PC-3 (cell line): ENCODE measurements at regions of chr19 and their contacts with region 1.

Region 1: DNA sequence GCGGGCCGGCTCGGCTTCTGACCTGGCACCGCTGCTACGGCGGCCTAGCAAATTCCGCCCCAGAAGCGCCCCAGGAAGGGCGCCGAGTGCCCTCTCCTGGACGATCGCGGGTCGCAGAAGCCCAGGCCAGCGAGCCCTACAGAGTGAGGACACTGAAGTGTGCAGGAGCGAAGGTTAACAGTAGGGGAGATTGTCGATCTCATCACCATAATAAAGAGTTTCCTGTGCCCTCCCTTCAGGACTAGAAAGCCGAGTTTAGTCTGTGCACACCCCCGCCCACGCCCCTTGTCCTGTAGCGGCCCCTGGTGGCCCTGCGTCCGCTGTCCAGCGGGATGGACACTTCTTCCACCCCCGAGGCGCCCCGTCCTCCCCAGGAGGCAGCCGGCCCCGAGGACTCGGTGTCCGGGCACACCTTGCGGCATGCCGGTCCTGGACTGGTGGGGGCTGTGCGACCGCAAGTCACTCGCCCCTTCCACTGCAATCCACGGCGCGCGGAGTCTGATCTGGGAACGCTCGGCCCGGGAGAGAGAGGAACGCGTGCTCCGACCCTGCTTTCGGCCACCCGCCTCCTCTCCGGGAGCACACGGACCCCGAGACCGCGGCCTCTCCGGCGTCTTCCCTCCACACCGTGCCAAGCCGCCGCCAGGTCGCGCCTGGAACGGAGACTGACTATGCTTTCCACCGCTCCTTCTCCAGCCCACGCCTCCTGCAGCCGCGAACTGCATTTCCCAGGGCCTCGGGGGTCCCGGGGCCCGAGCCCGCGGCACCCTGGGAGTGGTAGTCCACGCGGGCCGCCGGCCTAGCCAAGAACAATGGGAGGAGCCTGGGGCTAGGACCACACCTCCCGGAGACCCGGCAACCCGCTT is 769 bp upstream of the KMT2B start:
- DNase-seq: peak; percentile 77
- ATAC-seq: peak; percentile 84
- H3K4me3 ChIP-seq: peak overlapping the region; percentile 91
- H3K27ac ChIP-seq: peak overlapping the region; percentile 50
- H3K4me1 ChIP-seq: peaks cover 20% of the 10 kb centered on the region; the same call in 1 of the 2 replicates
- H3K27me3 ChIP-seq: no peaks in the 10 kb centered on the region
- CTCF ChIP-seq: peak; percentile 80

Region 2: GRCh38 chr19:35545001-35545911 is 171.8 kb before region 1 on chr19 and contains the start of gene TMEM147:
- CTCF ChIA-PET with region 1: no interaction called
- POLR2A ChIA-PET with region 1: no interaction called
- intact Hi-C with region 1: loop called (anchors 5 kb)
- DNase-seq: peak; percentile 84
- ATAC-seq: peak; percentile 94
- H3K4me3 ChIP-seq: peak within 1 kb of the TSS; percentile 88
- H3K27ac ChIP-seq: peak within 1 kb of the TSS; percentile 48
- H3K4me1 ChIP-seq: peaks cover 14% of the 10 kb centered on the region; the same call in 1 of the 2 replicates
- H3K27me3 ChIP-seq: no peaks in the 10 kb centered on the region
- CTCF ChIP-seq: no peak
- total RNA-seq, gene TMEM147: 191 and 206 TPM in 2 replicates

Region 3: DNA sequence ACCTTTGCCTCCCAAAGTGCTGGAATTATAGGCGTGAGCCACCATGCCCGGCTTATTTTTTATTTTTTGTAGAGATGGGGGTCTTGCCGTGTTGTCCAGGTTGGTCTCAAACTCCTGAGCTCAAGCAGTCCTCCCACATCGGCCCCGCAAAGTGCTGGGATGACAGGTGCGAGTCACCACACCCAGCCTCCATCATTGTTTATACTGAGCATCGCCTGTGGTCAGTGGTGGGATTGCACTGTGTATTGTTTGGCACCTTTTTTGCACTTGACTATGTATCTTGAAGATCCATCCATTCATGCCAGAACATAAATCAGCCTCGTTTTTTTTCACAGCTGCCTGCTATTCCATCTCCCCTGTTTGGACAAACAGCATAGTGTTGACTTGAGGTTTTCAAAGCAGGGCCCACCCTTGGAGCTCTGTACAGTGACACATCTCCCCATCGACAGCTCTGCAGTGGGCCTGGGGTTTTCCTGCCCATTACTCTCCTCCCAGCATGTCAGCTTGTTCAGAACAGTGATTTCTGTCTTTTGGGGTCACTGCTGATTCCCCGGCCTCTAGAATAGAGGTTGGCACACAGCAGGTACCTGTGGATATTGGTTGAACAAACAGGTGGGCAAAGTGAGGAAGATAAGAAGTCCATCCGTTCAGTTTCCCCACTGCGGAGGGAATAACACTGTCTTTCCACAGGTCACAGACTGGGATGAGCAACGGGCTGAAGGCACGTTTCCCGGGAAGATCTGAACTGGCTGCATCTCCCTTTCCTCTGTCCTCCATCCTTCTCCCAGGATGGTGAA is 58.9 kb before region 1 on chr19:
- CTCF ChIA-PET with region 1: no interaction called
- POLR2A ChIA-PET with region 1: interaction called, 13 read pairs
- intact Hi-C with region 1: no loop called
- DNase-seq: peak; percentile 18
- ATAC-seq: no peak
- H3K4me3 ChIP-seq: no peak overlapping the region
- H3K27ac ChIP-seq: no peak overlapping the region
- H3K4me1 ChIP-seq: no peaks in the 10 kb centered on the region
- H3K27me3 ChIP-seq: no peaks in the 10 kb centered on the region
- CTCF ChIP-seq: 0 out of 2 replicates have a peak, but pooled peaks have one; percentile 20

Region 4: DNA sequence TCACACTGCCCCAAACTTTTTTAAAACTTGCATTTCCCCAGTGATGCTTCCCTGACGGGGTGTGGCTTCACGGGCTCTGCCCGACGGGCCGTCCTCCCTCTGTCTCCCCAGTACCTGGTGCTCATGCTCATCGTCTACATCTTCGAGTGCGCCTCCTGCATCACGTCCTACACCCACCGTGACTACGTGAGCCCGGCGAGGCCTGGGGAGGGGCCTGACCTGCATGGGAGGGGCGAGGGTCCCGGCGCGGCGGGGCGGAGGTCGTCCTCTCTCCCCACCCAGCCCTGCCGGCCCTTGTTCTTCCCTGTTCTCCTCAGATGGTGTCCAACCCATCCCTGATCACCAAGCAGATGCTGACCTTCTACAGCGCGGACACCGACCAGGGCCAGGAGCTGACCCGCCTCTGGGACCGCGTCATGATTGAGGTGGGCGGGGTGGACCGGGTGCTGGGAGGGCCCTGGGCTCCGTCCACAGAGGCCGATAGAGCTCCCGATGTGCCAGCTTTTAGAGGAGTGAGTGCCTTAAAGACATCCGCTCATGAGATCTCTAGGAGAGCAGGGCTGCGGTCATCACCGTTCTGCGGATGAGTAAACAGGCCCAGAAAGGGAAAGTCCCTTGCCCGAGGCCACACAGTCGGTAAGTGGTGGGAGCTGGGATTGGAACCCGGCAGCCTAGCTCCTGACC is 43.8 kb before region 1 on chr19:
- CTCF ChIA-PET with region 1: no interaction called
- POLR2A ChIA-PET with region 1: no interaction called
- intact Hi-C with region 1: no loop called
- DNase-seq: no peak
- ATAC-seq: no peak
- H3K4me3 ChIP-seq: no peak overlapping the region
- H3K27ac ChIP-seq: no peak overlapping the region
- H3K4me1 ChIP-seq: no peaks in the 10 kb centered on the region
- H3K27me3 ChIP-seq: 0 out of 2 replicates have a peak, but pooled peaks cover 7% of the 10 kb centered on the region
- CTCF ChIP-seq: no peak

Region 5: GRCh38 chr19:35693830-35694599 is 23.0 kb before region 1 on chr19:
- CTCF ChIA-PET with region 1: no interaction called
- POLR2A ChIA-PET with region 1: no interaction called
- intact Hi-C with region 1: loop called (anchors 1 kb)
- DNase-seq: peak; percentile 86
- ATAC-seq: peak; percentile 100
- H3K4me3 ChIP-seq: no peak overlapping the region
- H3K27ac ChIP-seq: no peak overlapping the region
- H3K4me1 ChIP-seq: no peaks in the 10 kb centered on the region
- H3K27me3 ChIP-seq: no peaks in the 10 kb centered on the region
- CTCF ChIP-seq: peak; percentile 84

Region 6: DNA sequence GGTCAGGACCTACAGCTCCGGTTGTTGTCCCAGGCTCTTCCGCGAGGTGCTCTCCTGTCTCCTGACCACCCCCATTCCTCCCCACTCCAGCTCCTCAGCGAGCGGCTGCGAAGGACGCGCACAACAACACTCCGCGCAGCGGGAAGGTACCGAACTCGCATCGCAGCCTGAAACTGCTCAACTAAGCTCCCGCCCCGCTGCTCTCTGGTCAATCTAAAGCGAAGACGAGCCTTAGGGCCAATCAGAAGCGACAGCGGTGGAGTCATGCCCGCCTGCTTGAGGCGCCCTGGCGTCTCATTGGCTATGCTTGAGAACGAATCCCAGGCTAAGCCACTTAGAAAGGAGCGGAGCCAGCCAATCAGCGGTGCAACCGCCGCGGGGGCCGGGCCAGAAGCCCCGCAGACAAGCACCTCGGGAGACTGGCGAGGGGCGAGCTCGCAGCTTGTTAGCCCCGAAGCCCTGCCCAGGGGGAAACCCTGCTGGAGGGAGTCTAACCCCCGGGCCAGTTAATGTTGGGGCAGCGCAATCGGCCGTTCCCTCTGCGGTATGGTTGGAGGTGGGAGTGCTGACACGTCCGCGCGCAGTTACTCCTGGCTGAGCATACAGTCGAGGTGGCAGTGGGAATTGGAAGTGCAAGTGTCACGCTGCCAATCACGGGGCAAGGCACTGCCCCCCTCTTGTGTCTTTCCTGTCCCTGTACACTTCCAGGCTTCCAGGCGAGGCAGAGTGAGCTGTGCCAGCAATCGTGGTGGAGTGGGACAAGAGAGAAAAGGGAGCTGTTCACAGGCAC is 14.6 kb before region 1 on chr19:
- CTCF ChIA-PET with region 1: no interaction called
- POLR2A ChIA-PET with region 1: no interaction called
- intact Hi-C with region 1: loop called (anchors 2 kb)
- DNase-seq: peak; percentile 96
- ATAC-seq: peak; percentile 100
- H3K4me3 ChIP-seq: peak overlapping the region; percentile 84
- H3K27ac ChIP-seq: no peak overlapping the region
- H3K4me1 ChIP-seq: no peaks in the 10 kb centered on the region
- H3K27me3 ChIP-seq: no peaks in the 10 kb centered on the region
- CTCF ChIP-seq: no peak

Region 7: GRCh38 chr19:35748106-35749020 is 31.3 kb after region 1 on chr19 and contains the start of gene LIN37:
- CTCF ChIA-PET with region 1: no interaction called
- POLR2A ChIA-PET with region 1: no interaction called
- intact Hi-C with region 1: loop called (anchors 2 kb)
- DNase-seq: peak; percentile 97
- ATAC-seq: peak; percentile 83
- H3K4me3 ChIP-seq: peak within 1 kb of the TSS; percentile 100
- H3K27ac ChIP-seq: no peak within 1 kb of the TSS
- H3K4me1 ChIP-seq: peaks cover 23% of the 10 kb centered on the region
- H3K27me3 ChIP-seq: no peaks in the 10 kb centered on the region
- CTCF ChIP-seq: no peak
- total RNA-seq, gene LIN37: 4.6 and 8.2 TPM in 2 replicates

Region 8: GRCh38 chr19:35790981-35791813 is 74.2 kb after region 1 on chr19:
- CTCF ChIA-PET with region 1: no interaction called
- POLR2A ChIA-PET with region 1: no interaction called
- intact Hi-C with region 1: no loop called
- DNase-seq: no peak
- ATAC-seq: no peak
- H3K4me3 ChIP-seq: no peak overlapping the region
- H3K27ac ChIP-seq: no peak overlapping the region
- H3K4me1 ChIP-seq: no peaks in the 10 kb centered on the region
- H3K27me3 ChIP-seq: no peaks in the 10 kb centered on the region
- CTCF ChIP-seq: 0 out of 2 replicates have a peak, but pooled peaks have one; percentile 20

Region 9: GRCh38 chr19:35812220-35813042 is 95.4 kb after region 1 on chr19 and contains the start of gene PRODH2:
- CTCF ChIA-PET with region 1: no interaction called
- POLR2A ChIA-PET with region 1: no interaction called
- intact Hi-C with region 1: no loop called
- DNase-seq: no peak
- ATAC-seq: no peak
- H3K4me3 ChIP-seq: no peak within 1 kb of the TSS
- H3K27ac ChIP-seq: no peak within 1 kb of the TSS
- H3K4me1 ChIP-seq: no peaks in the 10 kb centered on the region
- H3K27me3 ChIP-seq: no peaks in the 10 kb centered on the region
- CTCF ChIP-seq: no peak
- total RNA-seq, gene PRODH2: not detected in 2 replicates

Region 10: DNA sequence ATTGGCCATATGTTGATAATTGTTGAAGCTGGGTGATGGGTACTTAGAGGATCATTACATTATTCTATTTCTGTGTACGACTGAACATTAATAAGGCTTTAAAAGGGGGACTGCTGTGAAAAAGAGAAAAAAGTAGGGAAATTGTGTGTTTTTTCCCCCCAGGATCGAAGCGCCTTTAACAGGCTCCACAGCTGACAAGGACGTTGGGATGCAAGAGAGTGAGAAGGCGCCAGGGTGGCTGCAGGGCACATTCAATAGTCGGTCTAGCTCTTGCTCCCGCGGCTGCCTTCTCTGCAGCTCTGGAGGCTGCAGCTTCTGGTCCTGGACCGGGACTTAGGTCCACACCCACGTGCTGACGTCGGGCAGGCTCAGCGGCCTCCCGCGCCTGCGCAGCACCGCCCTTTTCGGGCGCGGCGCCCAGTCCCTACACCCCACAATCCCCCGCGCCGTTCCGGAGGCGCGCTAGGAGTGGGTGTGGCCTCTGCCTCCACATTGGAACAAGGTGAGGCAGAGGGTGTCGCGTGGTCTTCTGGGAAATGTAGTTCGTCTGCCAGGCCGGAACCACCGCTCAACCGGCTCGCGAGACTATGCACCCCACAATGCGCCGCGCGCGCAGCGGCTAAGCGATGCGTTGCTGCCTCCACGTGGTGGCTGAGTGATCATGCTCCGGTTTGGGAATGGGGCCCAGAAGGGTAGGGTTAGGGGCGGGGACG is 214.3 kb after region 1 on chr19:
- CTCF ChIA-PET with region 1: no interaction called
- POLR2A ChIA-PET with region 1: no interaction called
- intact Hi-C with region 1: loop called (anchors 10 kb)
- DNase-seq: peak; percentile 98
- ATAC-seq: peak; percentile 96
- H3K4me3 ChIP-seq: peak overlapping the region; percentile 64
- H3K27ac ChIP-seq: no peak overlapping the region
- H3K4me1 ChIP-seq: peaks cover 9% of the 10 kb centered on the region
- H3K27me3 ChIP-seq: no peaks in the 10 kb centered on the region
- CTCF ChIP-seq: peak; percentile 81